Natural killer cell (primary cell): ENCODE measurements at regions of chr6 and their contacts with region 1.

Region 1: GRCh38 chr6:33904050-33904746 is 100.4 kb upstream of the MLN start:
- DNase-seq: peak; percentile 71 to 89
- ATAC-seq: peak; percentile 68 to 80 (median 80)
- H3K4me3 ChIP-seq: no peak overlapping the region
- H3K4me3 Mint-ChIP-seq: peak overlapping the region; percentile 51
- H3K27ac ChIP-seq: peak overlapping the region; percentile 75
- H3K27ac Mint-ChIP-seq: peak overlapping the region; percentile 61 to 79
- H3K4me1 ChIP-seq: peaks cover 57% of the 10 kb centered on the region
- H3K4me1 Mint-ChIP-seq: peaks cover 73 to 77% of the 10 kb centered on the region in 2 donors
- H3K27me3 ChIP-seq: no peaks in the 10 kb centered on the region
- H3K27me3 Mint-ChIP-seq: peaks cover 34 to 35% of the 10 kb centered on the region in 2 donors
- CTCF ChIP-seq: no peak

Region 2: GRCh38 chr6:33788694-33789549 is 115.3 kb before region 1 on chr6 and contains the start of gene LEMD2:
- intact Hi-C with region 1: loop called (anchors 2 kb)
- DNase-seq: peak; percentile 95
- ATAC-seq: peak; percentile 87 to 95 (median 91)
- H3K4me3 ChIP-seq: peak within 1 kb of the TSS; percentile 49
- H3K4me3 Mint-ChIP-seq: peak within 1 kb of the TSS; percentile 98
- H3K27ac ChIP-seq: peak within 1 kb of the TSS; percentile 64
- H3K27ac Mint-ChIP-seq: peak within 1 kb of the TSS; percentile 90 to 96
- H3K4me1 ChIP-seq: peaks cover 35% of the 10 kb centered on the region
- H3K4me1 Mint-ChIP-seq: peaks cover 49 to 50% of the 10 kb centered on the region in 2 donors
- H3K27me3 ChIP-seq: no peaks in the 10 kb centered on the region
- H3K27me3 Mint-ChIP-seq: peaks cover 3 to 17% of the 10 kb centered on the region in 2 donors
- CTCF ChIP-seq: no peak
- total RNA-seq, gene LEMD2: 109 to 133 (median 121) TPM

Region 3: DNA sequence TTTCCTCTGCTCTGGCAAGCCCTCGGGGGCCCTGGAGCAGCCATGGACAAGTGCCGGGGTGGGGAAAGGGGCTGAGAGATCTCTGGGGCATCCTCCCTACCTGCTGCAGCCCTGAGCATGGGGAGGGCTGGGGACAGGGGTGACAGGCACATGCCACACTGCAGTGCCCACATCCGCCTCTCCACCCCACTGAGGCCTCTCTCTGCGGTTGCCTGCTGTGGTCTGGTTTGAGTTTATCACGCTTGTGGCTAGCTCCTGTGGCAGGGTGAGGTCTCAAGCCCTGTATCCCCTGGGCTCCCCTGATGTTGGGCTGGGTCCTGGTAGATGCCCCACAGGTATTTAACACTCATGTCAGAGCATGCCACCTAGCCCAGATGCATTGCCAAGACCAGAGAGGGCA is 47.5 kb before region 1 on chr6:
- intact Hi-C with region 1: loop called (anchors 2 kb)
- DNase-seq: peak; percentile 69 to 82
- ATAC-seq: peak; percentile 77 to 95 (median 84)
- H3K4me3 ChIP-seq: no peak overlapping the region
- H3K4me3 Mint-ChIP-seq: peak overlapping the region; percentile 57
- H3K27ac ChIP-seq: no peak overlapping the region
- H3K27ac Mint-ChIP-seq: no peak overlapping the region
- H3K4me1 ChIP-seq: peaks cover 62% of the 10 kb centered on the region
- H3K4me1 Mint-ChIP-seq: peaks cover 38 to 48% of the 10 kb centered on the region in 2 donors
- H3K27me3 ChIP-seq: peaks cover 92% of the 10 kb centered on the region
- H3K27me3 Mint-ChIP-seq: peaks cover 53 to 54% of the 10 kb centered on the region in 2 donors
- CTCF ChIP-seq: no peak

Region 4: DNA sequence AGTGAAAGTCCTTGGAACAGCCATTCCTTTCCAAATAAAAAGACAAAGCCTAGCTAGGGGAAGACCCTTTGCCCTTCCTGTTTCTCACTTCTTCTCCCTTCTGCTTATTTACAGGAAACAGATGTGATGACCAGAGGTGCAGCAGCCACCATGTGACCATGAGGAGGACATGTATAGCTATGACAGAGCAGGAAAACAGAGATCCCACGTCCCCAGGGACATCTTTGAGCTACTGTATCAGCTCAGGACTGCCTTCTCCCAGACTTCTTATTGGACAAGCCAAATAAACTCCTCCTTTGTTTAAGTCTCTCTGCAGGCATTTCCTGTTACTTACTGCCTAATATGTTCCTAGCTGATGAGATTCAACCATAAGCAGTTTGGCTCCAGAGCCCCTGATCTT is 32.7 kb after region 1 on chr6:
- intact Hi-C with region 1: no loop called
- DNase-seq: no peak
- ATAC-seq: no peak
- H3K4me3 ChIP-seq: no peak overlapping the region
- H3K4me3 Mint-ChIP-seq: no peak overlapping the region
- H3K27ac ChIP-seq: no peak overlapping the region
- H3K27ac Mint-ChIP-seq: no peak overlapping the region
- H3K4me1 ChIP-seq: no peaks in the 10 kb centered on the region
- H3K4me1 Mint-ChIP-seq: peaks cover 0 to 16% of the 10 kb centered on the region in 2 donors
- H3K27me3 ChIP-seq: peaks cover 5% of the 10 kb centered on the region
- H3K27me3 Mint-ChIP-seq: peaks cover 30 to 85% of the 10 kb centered on the region in 2 donors
- CTCF ChIP-seq: no peak

Region 5: DNA sequence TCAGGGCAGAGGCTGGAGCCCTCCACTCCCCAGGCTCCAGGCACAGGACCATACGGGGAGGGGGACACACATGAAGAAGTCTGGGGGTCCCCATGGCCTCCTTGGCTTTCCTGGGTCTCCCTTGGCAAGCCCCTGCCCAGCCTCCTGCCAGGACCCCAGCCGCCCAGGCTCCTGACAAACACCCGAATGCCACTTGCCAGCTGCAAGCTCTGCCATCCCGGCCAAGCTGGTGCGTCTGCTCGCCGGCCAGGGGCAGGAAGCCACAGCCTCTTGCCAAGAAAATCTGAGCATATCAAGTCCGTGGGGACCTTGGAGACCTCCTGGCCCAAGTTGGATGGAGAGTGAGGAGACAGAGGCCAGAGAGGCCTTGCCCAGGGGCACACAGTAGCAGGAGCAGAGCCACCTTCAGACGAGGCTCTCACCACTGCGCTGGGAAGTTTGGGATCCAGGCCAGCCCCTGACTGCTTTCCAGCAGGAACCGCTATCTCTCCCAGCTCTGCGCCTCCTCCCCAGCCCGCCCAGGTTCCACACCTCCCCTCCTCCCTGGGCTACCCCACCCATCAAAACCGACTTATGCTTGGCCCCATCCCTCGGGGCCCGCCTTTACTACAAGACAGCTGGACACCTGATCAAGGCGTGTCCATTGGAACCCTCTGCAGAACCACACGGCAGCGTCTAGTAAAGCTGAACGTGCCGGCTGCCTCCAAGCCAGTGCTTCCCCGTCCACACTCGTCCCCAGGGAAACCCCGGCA is 161.4 kb after region 1 on chr6:
- intact Hi-C with region 1: loop called (anchors 1 kb)
- DNase-seq: no peak
- ATAC-seq: no peak
- H3K4me3 ChIP-seq: no peak overlapping the region
- H3K4me3 Mint-ChIP-seq: no peak overlapping the region
- H3K27ac ChIP-seq: no peak overlapping the region
- H3K27ac Mint-ChIP-seq: no peak overlapping the region
- H3K4me1 ChIP-seq: no peaks in the 10 kb centered on the region
- H3K4me1 Mint-ChIP-seq: no peaks in the 10 kb centered on the region
- H3K27me3 ChIP-seq: no peaks in the 10 kb centered on the region
- H3K27me3 Mint-ChIP-seq: peaks cover 0 to 5% of the 10 kb centered on the region in 2 donors
- CTCF ChIP-seq: no peak